ENCODE measurements at regions of chr2 and their contacts with region 1.

Region 1: GRCh38 chr2:171893824-171894611 is at the start of gene SLC25A12:
- DNase-seq: peak; percentile 85
- H3K4me3 Mint-ChIP-seq: peak within 1 kb of the TSS; percentile 99
- H3K27ac Mint-ChIP-seq: peak within 1 kb of the TSS; percentile 91
- H3K4me1 Mint-ChIP-seq: peaks cover 27% of the 10 kb centered on the region
- H3K27me3 Mint-ChIP-seq: no peaks in the 10 kb centered on the region
- CTCF ChIP-seq: no peak
- total RNA-seq, gene SLC25A12: 11.5 and 12.5 TPM in 2 replicates

Region 2: GRCh38 chr2:171798252-171798741 is 95.7 kb before region 1 on chr2:
- CTCF ChIA-PET with region 1: no interaction called
- POLR2A ChIA-PET with region 1: no interaction called
- intact Hi-C with region 1: no loop called
- DNase-seq: peak; percentile 49
- H3K4me3 Mint-ChIP-seq: no peak overlapping the region
- H3K27ac Mint-ChIP-seq: peak overlapping the region; percentile 84
- H3K4me1 Mint-ChIP-seq: peaks cover 7% of the 10 kb centered on the region
- H3K27me3 Mint-ChIP-seq: no peaks in the 10 kb centered on the region
- CTCF ChIP-seq: no peak

Region 3: GRCh38 chr2:171811245-171811628 is 82.8 kb before region 1 on chr2:
- CTCF ChIA-PET with region 1: interaction called, 3 read pairs
- POLR2A ChIA-PET with region 1: interaction called, 12 read pairs
- intact Hi-C with region 1: no loop called
- DNase-seq: peak; percentile 46
- H3K4me3 Mint-ChIP-seq: no peak overlapping the region
- H3K27ac Mint-ChIP-seq: no peak overlapping the region
- H3K4me1 Mint-ChIP-seq: peaks cover 12% of the 10 kb centered on the region
- H3K27me3 Mint-ChIP-seq: no peaks in the 10 kb centered on the region
- CTCF ChIP-seq: peak; percentile 34

Region 4: DNA sequence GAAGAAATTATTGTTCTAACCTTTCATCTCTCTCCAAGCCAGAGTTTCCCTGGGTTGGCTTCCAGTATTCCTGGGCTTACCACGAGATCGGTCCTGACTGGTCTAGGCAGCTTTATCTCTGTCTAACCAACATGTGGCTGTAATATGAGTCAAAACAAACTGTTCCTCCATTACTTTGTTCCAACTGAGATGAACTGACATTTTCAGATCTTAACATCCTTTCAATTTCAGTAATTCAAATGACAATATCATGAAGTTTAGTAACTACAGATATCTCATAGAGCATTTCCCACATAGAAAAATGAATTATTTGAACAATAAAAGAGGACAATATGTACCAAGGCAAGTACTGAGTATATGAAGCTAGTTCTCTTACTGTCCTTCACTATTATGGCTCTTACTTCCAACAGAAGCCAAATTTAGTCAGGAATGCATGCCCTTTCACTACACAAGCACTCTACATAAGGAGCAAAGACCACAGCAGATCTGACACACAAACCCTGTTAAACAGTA is 15.5 kb before region 1 on chr2:
- CTCF ChIA-PET with region 1: interaction called, 5 read pairs
- POLR2A ChIA-PET with region 1: interaction called, 42 read pairs
- intact Hi-C with region 1: no loop called
- DNase-seq: peak; percentile 51
- H3K4me3 Mint-ChIP-seq: no peak overlapping the region
- H3K27ac Mint-ChIP-seq: peak overlapping the region; percentile 60
- H3K4me1 Mint-ChIP-seq: peaks cover 14% of the 10 kb centered on the region
- H3K27me3 Mint-ChIP-seq: no peaks in the 10 kb centered on the region
- CTCF ChIP-seq: no peak

Region 5: DNA sequence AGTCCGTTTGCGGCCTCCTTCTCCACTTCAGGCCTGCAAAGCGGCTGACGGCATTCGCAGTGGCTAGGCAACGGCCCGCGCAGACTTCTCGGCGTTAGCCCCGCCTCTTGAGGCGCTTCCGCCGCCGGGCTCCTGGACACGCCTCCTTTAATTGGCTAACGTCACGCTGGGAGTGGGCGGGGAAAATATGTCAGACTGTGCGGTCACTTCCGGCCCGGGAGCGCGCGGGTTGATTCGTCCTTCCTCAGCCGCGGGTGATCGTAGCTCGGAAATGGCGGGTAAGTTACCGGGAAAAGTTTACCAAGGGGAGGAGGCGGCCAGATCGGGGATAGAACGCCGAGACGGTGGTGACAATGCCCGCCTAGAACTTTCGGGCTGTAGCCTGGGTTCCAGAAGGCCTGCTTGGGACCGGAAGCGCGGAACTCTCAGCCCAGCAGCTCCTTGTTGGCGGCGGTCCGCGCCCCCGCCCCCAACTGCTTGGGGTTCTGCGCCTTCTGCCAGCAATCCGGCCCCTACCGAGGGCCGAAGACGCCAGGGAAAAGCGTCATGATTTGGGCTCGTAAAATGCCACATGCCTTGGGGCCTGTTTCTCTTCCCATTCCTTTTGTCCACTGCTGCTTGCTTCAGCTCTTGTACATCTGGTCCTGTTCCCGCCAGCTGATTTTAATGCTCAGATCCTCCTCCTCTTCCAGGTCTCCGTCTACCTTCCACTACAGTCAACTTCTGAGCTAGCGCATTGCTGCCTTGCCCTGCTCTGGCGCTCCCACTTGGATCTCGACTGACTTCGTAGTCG is 28.4 kb after region 1 on chr2 and contains the start of gene HAT1:
- CTCF ChIA-PET with region 1: no interaction called
- POLR2A ChIA-PET with region 1: interaction called, 97 read pairs
- intact Hi-C with region 1: no loop called
- DNase-seq: peak; percentile 98
- H3K4me3 Mint-ChIP-seq: peak within 1 kb of the TSS; percentile 90
- H3K27ac Mint-ChIP-seq: peak within 1 kb of the TSS; percentile 97
- H3K4me1 Mint-ChIP-seq: peaks cover 16% of the 10 kb centered on the region
- H3K27me3 Mint-ChIP-seq: no peaks in the 10 kb centered on the region
- CTCF ChIP-seq: no peak
- total RNA-seq, gene HAT1: 40.7 and 41.8 TPM in 2 replicates

Region 6: GRCh38 chr2:172131713-172132555 is 237.9 kb after region 1 on chr2:
- CTCF ChIA-PET with region 1: interaction called, 4 read pairs
- POLR2A ChIA-PET with region 1: interaction called, 10 read pairs
- intact Hi-C with region 1: no loop called
- DNase-seq: no peak
- H3K4me3 Mint-ChIP-seq: no peak overlapping the region
- H3K27ac Mint-ChIP-seq: peak overlapping the region; percentile 27
- H3K4me1 Mint-ChIP-seq: peaks cover 8% of the 10 kb centered on the region
- H3K27me3 Mint-ChIP-seq: no peaks in the 10 kb centered on the region
- CTCF ChIP-seq: no peak